ENCODE measurements at regions of chr16 and their contacts with region 1.

Region 1: GRCh38 chr16:54285414-54286089 is 1.0 kb downstream of the IRX3 start:
- DNase-seq: no peak
- ATAC-seq: no peak
- H3K4me3 ChIP-seq: peak overlapping the region in 1 of 2 donors; percentile 64
- H3K4me3 Mint-ChIP-seq: peak overlapping the region in 1 of 3 donors; percentile 62
- H3K27ac ChIP-seq: no peak overlapping the region
- H3K27ac Mint-ChIP-seq: no peak overlapping the region
- H3K4me1 ChIP-seq: peaks cover 4 to 14% of the 10 kb centered on the region in 2 experiments
- H3K4me1 Mint-ChIP-seq: peaks cover 33 to 40% (median 35%) of the 10 kb centered on the region in 3 donors
- H3K27me3 ChIP-seq: peaks cover 15 to 84% of the 10 kb centered on the region in 2 experiments
- H3K27me3 Mint-ChIP-seq: peaks cover 42 to 76% of the 10 kb centered on the region in 2 donors

Region 2: DNA sequence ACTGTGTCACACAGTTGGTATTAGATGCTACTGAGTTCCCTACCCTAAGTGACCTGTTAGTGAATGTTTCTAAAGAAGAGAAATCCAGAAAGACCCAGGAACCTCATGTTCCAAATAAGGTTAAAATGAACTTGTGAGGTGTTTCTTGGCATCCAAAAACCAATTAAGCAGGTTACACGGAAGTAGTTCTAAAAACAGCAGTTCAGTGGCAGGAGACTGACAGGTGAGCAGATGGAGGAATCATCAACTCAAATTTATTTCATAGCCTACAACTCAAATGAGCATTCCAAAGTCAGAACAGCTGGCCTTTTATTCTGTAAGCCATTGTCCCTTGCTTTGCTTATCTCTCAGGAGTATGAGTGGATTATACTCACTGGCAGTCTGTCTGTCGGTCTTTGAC is 187.3 kb before region 1 on chr16:
- CTCF ChIA-PET with region 1: no interaction called
- POLR2A ChIA-PET with region 1: no interaction called
- DNase-seq: no peak
- ATAC-seq: no peak
- H3K4me3 ChIP-seq: no peak overlapping the region
- H3K4me3 Mint-ChIP-seq: no peak overlapping the region
- H3K27ac ChIP-seq: no peak overlapping the region
- H3K27ac Mint-ChIP-seq: no peak overlapping the region
- H3K4me1 ChIP-seq: no peaks in the 10 kb centered on the region
- H3K4me1 Mint-ChIP-seq: no peaks in the 10 kb centered on the region
- H3K27me3 ChIP-seq: no peaks in the 10 kb centered on the region
- H3K27me3 Mint-ChIP-seq: no peaks in the 10 kb centered on the region

Region 3: GRCh38 chr16:54241525-54241924 is 44.0 kb before region 1 on chr16:
- CTCF ChIA-PET with region 1: no interaction called
- POLR2A ChIA-PET with region 1: interaction called in 1 of 2 experiments, 12 read pairs
- DNase-seq: no peak
- ATAC-seq: no peak
- H3K4me3 ChIP-seq: no peak overlapping the region
- H3K4me3 Mint-ChIP-seq: no peak overlapping the region
- H3K27ac ChIP-seq: no peak overlapping the region
- H3K27ac Mint-ChIP-seq: no peak overlapping the region
- H3K4me1 ChIP-seq: no peaks in the 10 kb centered on the region
- H3K4me1 Mint-ChIP-seq: no peaks in the 10 kb centered on the region
- H3K27me3 ChIP-seq: peaks cover 0 to 24% of the 10 kb centered on the region in 2 experiments
- H3K27me3 Mint-ChIP-seq: peaks cover 15 to 16% of the 10 kb centered on the region in 2 donors

Region 4: DNA sequence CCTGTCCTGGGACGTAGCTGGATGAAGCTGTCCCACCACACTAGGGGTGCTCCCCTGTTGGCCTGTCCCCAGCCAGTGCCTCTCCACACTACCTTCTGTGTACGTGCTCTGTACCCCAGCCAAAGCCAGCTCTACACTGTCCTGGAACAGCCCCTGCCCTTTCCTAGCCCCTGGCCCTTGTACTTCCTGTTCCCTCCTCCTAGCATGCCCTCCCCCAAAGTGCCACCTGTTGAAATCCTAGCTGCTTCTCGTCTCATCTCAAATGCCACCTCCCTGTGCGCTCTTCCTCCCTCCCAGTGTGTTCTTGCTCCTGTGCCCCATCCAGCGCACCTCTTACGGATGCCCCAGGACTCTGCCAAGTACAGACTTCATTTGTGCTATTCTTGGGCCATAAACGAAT is 32.4 kb before region 1 on chr16:
- CTCF ChIA-PET with region 1: no interaction called
- POLR2A ChIA-PET with region 1: no interaction called
- DNase-seq: no peak
- ATAC-seq: no peak
- H3K4me3 ChIP-seq: no peak overlapping the region
- H3K4me3 Mint-ChIP-seq: no peak overlapping the region
- H3K27ac ChIP-seq: no peak overlapping the region
- H3K27ac Mint-ChIP-seq: no peak overlapping the region
- H3K4me1 ChIP-seq: no peaks in the 10 kb centered on the region
- H3K4me1 Mint-ChIP-seq: no peaks in the 10 kb centered on the region
- H3K27me3 ChIP-seq: peaks cover 2 to 8% of the 10 kb centered on the region in 2 experiments
- H3K27me3 Mint-ChIP-seq: peaks cover 3 to 8% of the 10 kb centered on the region in 2 donors

Region 5: GRCh38 chr16:54305080-54305479 is 19.5 kb after region 1 on chr16:
- CTCF ChIA-PET with region 1: no interaction called
- POLR2A ChIA-PET with region 1: no interaction called
- DNase-seq: no peak
- ATAC-seq: no peak
- H3K4me3 ChIP-seq: no peak overlapping the region
- H3K4me3 Mint-ChIP-seq: no peak overlapping the region
- H3K27ac ChIP-seq: no peak overlapping the region
- H3K27ac Mint-ChIP-seq: no peak overlapping the region
- H3K4me1 ChIP-seq: no peaks in the 10 kb centered on the region
- H3K4me1 Mint-ChIP-seq: no peaks in the 10 kb centered on the region
- H3K27me3 ChIP-seq: peaks cover 0 to 3% of the 10 kb centered on the region in 2 experiments
- H3K27me3 Mint-ChIP-seq: peaks cover 17 to 24% of the 10 kb centered on the region in 2 donors

Region 6: DNA sequence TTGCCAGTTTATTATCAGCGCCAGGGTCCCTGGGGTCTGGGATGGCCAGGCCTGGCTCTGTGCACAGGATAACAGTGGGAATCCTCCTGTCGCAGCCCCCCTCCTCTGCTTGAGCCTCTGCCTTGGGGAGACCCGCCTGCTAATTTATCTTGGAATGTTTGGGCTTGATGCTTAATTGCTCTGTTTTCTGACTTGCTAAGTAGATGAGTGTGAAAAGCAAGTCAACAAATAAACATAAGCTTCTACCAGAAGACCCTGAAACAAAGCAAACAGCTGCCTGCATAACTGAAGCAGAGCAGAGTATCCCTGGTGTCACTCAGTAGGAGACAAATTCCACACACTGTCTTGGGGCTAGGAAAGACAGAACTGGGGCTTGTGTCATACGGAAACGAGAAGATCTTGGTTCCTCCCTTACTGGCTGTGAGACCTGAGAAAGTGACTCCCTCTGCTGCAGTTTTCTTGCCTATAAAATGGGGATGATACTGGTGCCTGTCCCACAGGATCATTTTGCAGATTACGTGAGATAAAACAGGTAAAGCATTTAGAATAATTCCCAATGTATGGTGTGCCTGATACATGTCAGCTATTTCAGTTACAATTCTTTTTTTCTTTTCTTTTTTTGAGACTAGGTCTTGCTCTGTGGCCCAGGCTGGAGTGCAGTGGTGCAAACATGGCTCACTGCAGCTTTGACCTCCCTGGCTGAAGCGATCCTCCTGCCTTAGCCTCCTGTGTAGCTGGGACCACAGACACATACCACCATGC is 45.9 kb after region 1 on chr16:
- CTCF ChIA-PET with region 1: no interaction called
- POLR2A ChIA-PET with region 1: no interaction called
- DNase-seq: no peak
- ATAC-seq: no peak
- H3K4me3 ChIP-seq: no peak overlapping the region
- H3K4me3 Mint-ChIP-seq: no peak overlapping the region
- H3K27ac ChIP-seq: no peak overlapping the region
- H3K27ac Mint-ChIP-seq: no peak overlapping the region
- H3K4me1 ChIP-seq: no peaks in the 10 kb centered on the region
- H3K4me1 Mint-ChIP-seq: no peaks in the 10 kb centered on the region
- H3K27me3 ChIP-seq: peaks cover 0 to 10% of the 10 kb centered on the region in 2 experiments
- H3K27me3 Mint-ChIP-seq: peaks cover 9 to 23% of the 10 kb centered on the region in 2 donors